ENCODE measurements at regions of chr3 and their contacts with region 1.

Region 1: GRCh38 chr3:93979833-93980676 is at the start of gene ARL13B:
- DNase-seq: peak; percentile 95 to 98 (median 96)
- H3K4me3 ChIP-seq: peak within 1 kb of the TSS; percentile 49 to 95 (median 90)
- H3K4me3 Mint-ChIP-seq: peak within 1 kb of the TSS; percentile 87 to 89
- H3K27ac ChIP-seq: peak within 1 kb of the TSS; percentile 86 to 95
- H3K27ac Mint-ChIP-seq: peak within 1 kb of the TSS; percentile 87 to 96 (median 95)
- H3K4me1 ChIP-seq: peaks cover 10 to 14% of the 10 kb centered on the region in 2 donors
- H3K4me1 Mint-ChIP-seq: peaks cover 15% of the 10 kb centered on the region
- H3K27me3 ChIP-seq: no peaks in the 10 kb centered on the region
- H3K27me3 Mint-ChIP-seq: peaks cover 0 to 3% (median 0%) of the 10 kb centered on the region in 3 donors
- CTCF ChIP-seq: no peak
- polyA plus RNA-seq, gene ARL13B: 0.97 to 3.8 (median 3.0) TPM

Region 2: DNA sequence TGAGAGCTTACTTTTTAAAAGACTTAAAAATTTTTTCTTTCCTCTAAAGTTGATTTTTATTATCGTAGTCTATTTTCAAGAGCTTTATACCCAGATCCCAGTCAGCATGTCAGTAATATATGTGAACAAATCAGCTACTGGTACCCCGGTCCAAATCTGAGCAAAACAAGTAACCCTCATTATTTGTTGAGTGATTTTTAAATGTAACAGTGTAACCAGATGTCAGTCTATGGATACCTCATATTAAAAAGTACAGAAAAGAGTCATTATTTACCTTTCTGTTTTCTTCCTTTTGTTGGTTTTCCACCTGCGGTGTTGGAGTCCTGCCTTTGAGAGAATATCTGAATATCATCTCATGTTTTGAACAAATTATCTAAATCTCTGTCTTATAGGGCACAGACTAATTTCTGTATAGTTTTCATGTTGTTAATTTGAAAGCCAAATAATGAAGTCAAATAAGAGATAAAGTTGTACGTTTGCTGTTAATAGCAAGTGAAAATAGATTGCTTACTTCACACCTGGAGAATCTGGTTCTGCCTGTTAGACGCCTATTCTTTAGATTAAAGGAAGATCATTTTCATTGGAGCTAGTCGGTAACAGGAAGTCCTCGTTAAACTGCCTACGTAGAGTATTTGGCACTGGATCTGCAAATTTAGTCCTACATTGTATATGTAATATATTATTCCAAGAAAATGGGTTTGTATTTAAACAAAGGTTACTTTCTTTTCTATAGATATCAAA is 48.2 kb after region 1 on chr3 and contains the start of gene STX19:
- intact Hi-C with region 1: no loop called
- DNase-seq: no peak
- H3K4me3 ChIP-seq: no peak within 1 kb of the TSS
- H3K4me3 Mint-ChIP-seq: no peak within 1 kb of the TSS
- H3K27ac ChIP-seq: no peak within 1 kb of the TSS
- H3K27ac Mint-ChIP-seq: no peak within 1 kb of the TSS
- H3K4me1 ChIP-seq: no peaks in the 10 kb centered on the region
- H3K4me1 Mint-ChIP-seq: no peaks in the 10 kb centered on the region
- H3K27me3 ChIP-seq: no peaks in the 10 kb centered on the region
- H3K27me3 Mint-ChIP-seq: no peaks in the 10 kb centered on the region
- CTCF ChIP-seq: no peak
- polyA plus RNA-seq, gene STX19: not detected

Region 3: DNA sequence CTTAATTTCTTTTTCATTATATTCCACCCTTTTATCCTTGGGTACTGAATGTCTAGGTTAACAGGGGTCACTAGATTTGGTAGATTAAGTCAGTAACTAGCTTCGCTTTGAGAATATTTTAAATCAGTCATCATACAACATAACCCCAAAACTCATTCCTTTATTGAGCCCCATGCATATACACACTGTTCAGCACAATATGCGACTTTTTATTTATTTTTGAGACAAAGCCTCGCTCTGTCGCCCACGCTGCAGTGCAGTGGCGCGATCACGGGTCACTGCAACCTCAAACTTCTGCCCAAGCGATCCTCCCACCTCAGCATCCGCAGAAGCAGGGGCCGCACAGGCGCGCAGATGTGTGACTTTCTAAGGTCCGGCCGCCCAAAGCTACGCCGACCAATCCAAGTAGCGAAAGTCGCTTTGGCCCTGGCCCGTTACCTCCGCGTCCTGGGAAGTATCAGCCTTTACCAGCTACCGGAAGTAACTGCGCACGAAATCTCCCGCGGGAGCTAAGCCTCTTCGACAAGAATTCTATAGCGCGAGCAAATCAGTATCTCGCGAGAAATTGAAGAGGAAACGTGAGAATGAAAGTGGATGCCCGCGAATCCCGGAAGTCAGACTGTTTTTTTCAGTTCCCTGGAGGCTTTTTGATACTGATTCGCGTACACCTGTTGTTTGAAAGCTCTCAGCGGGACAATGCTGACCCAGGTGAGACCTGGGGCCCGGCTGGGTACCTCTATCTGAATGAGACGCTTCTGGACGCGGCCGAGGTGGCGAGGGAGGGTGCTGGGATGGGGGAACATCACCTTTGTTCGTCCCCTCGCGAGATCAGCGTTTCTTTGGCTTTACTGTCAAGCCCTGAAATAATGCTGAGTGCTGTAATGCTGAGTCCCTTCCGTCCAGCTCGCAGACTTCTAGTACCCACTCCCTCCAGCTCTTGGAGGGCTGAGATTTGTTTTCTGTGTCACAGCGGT is 82.7 kb after region 1 on chr3 and contains the starts of genes DHFR2 and NSUN3:
- intact Hi-C with region 1: loop called in 1 of 2 experiments (anchors 5 kb)
- DNase-seq: peak; percentile 89 to 96 (median 94)
- H3K4me3 ChIP-seq: peak within 1 kb of the TSS; percentile 69 to 86 (median 80)
- H3K4me3 Mint-ChIP-seq: peak within 1 kb of the TSS; percentile 93 to 99
- H3K27ac ChIP-seq: peak within 1 kb of the TSS; percentile 94 to 98
- H3K27ac Mint-ChIP-seq: peak within 1 kb of the TSS; percentile 100
- H3K4me1 ChIP-seq: peaks cover 34 to 39% of the 10 kb centered on the region in 2 donors
- H3K4me1 Mint-ChIP-seq: peaks cover 41% of the 10 kb centered on the region
- H3K27me3 ChIP-seq: no peaks in the 10 kb centered on the region
- H3K27me3 Mint-ChIP-seq: peaks cover 0 to 1% (median 0%) of the 10 kb centered on the region in 3 donors
- CTCF ChIP-seq: no peak
- polyA plus RNA-seq, gene DHFR2: 0.35 to 2.8 (median 1.2) TPM
- polyA plus RNA-seq, gene NSUN3: 6.6 to 8.8 (median 7.2) TPM